K562 (cell line): ENCODE measurements at regions of chr22 and their contacts with region 1.

Region 1: GRCh38 chr22:20671409-20672081 is 102.4 kb upstream of the SERPIND1 start:
- DNase-seq: no peak
- ATAC-seq: peak; percentile 55; the same call in 2 of the 3 replicates
- H3K4me3 ChIP-seq: no peak overlapping the region
- H3K27ac ChIP-seq: no peak overlapping the region
- H3K4me1 ChIP-seq: peaks cover 0 to 18% of the 10 kb centered on the region in 2 experiments; a peak in 1 of 5 replicates
- H3K27me3 ChIP-seq: peaks cover 23 to 28% of the 10 kb centered on the region in 2 experiments
- CTCF ChIP-seq: no peak
- EP300 ChIP-seq: no peak
- POLR2A ChIP-seq: no peak
- RAD21 ChIP-seq: no peak

Region 2: DNA sequence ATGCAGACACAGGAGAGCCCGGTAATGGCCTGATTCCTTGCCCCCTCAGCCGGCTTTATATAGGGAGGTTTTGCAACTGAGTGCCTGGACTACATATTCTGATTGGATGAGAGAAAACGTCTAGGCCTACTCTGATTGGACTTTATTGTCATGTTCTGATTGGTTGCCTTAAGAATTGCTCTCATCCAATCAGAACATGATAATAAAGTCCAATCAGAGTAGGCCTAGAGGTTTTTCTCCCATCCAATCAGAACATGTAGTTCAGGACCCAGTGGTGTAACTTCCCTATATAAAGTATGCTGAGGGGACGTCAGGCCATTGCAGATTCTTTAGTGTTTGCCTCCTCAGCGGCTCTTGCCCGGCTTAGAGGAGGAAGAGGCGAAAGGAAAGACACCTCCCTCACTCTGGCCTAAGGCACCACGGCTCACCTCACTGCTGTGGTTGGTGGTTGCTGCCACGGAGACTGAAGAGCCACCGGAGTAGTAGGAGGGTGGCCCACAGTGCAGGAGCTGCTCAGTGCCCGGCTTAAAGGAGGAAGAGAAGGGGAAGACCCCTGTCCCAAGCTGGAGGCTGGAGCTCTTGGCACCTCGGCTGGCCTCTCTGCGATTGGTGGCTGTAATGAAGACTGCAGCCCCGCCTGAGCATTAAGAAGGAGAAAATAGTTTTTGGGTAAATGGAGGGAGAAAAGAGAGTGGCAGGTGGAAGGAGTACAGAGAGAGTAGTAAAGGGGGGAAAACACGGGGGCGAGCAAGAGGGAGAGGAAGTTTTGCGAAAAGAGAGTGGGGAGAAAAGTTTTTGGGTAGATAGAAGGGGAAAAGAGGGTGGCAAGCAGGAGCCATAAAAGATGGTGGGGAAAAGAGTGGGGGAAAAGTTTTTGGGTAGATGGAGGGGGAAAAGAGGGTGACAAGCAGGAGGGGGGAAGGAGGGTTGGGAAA is 14.4 kb before region 1 on chr22:
- CTCF ChIA-PET with region 1: interaction called, 5 read pairs
- POLR2A ChIA-PET with region 1: interaction called, 21 read pairs
- in situ Hi-C with region 1: no loop called
- intact Hi-C with region 1: no loop called
- DNase-seq: peak; percentile 80 to 94 (median 86)
- ATAC-seq: peak; percentile 86
- H3K4me3 ChIP-seq: peak overlapping the region; percentile 37
- H3K27ac ChIP-seq: peak overlapping the region; percentile 58; the same call in 2 of the 3 replicates
- H3K4me1 ChIP-seq: peaks cover 0 to 9% of the 10 kb centered on the region in 2 experiments; a peak in 3 of 5 replicates
- H3K27me3 ChIP-seq: peaks cover 39 to 45% of the 10 kb centered on the region in 2 experiments
- CTCF ChIP-seq: no peak; a peak in 1 of 6 replicates
- EP300 ChIP-seq: no peak
- POLR2A ChIP-seq: peak; percentile 96
- RAD21 ChIP-seq: 0 out of 4 replicates have a peak, but pooled peaks of 1 of the 2 experiments have one; percentile 5